ENCODE measurements at regions of chr22 and their contacts with region 1.

Region 1: DNA sequence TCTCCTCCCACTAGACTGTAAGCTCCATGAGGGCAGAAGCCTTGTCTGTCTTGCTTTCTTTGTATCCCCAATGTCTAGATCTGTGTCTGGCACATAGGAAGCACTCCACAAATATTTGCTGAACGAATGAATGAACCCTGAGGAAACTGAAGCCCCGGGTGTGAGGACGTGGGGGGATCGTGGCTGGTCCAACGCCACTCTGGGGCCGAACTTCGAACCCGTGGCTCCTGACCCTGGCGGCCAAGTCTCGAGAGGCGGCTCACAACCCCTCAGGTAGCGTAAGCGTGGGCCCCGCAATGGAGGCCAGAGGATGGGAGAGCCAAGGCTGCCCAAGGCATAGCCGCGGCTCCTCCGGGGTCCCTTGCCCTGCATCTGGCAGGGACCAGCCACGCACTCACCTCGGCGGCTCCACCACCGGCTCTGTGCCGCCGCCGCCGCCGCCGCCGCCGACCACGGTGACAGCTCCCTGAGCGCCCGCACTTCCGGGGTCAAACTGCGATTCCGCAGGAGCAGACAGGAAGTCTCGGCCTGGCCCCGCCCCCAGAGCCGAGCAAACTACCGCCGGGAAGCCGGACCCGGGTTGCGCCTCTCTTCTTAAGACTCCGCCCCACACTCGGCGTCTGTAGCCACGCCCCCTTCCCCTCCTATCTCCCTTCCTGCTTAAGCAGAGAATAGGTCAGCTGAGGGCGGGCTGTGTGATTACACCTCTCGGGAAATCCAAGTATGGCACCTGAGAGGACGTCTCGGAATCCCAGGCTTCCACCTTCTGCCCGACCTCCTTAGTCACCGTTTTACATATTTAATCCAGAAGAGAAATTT is at the start of gene ASCC2:
- DNase-seq: peak; percentile 95
- ATAC-seq: peak; percentile 81
- H3K4me3 ChIP-seq: peak within 1 kb of the TSS; percentile 99
- H3K27ac ChIP-seq: peak within 1 kb of the TSS; percentile 54
- H3K4me1 ChIP-seq: peaks cover 36% of the 10 kb centered on the region
- H3K27me3 ChIP-seq: no peaks in the 10 kb centered on the region
- CTCF ChIP-seq: no peak
- total RNA-seq, gene ASCC2: 37.0 and 49.6 TPM in 2 replicates

Region 2: GRCh38 chr22:29744902-29745301 is 93.1 kb before region 1 on chr22:
- CTCF ChIA-PET with region 1: no interaction called
- POLR2A ChIA-PET with region 1: no interaction called
- intact Hi-C with region 1: no loop called
- DNase-seq: no peak
- ATAC-seq: no peak
- H3K4me3 ChIP-seq: no peak overlapping the region
- H3K27ac ChIP-seq: no peak overlapping the region
- H3K4me1 ChIP-seq: no peaks in the 10 kb centered on the region
- H3K27me3 ChIP-seq: no peaks in the 10 kb centered on the region
- CTCF ChIP-seq: no peak

Region 3: GRCh38 chr22:29772170-29772641 is 65.8 kb before region 1 on chr22:
- CTCF ChIA-PET with region 1: no interaction called
- POLR2A ChIA-PET with region 1: no interaction called
- intact Hi-C with region 1: loop called (anchors 10 kb)
- DNase-seq: peak; percentile 47
- ATAC-seq: peak; percentile 36
- H3K4me3 ChIP-seq: no peak overlapping the region
- H3K27ac ChIP-seq: peak overlapping the region; percentile 73; the same call in 1 of the 2 replicates
- H3K4me1 ChIP-seq: peaks cover 12% of the 10 kb centered on the region
- H3K27me3 ChIP-seq: no peaks in the 10 kb centered on the region
- CTCF ChIP-seq: peak; percentile 62

Region 4: DNA sequence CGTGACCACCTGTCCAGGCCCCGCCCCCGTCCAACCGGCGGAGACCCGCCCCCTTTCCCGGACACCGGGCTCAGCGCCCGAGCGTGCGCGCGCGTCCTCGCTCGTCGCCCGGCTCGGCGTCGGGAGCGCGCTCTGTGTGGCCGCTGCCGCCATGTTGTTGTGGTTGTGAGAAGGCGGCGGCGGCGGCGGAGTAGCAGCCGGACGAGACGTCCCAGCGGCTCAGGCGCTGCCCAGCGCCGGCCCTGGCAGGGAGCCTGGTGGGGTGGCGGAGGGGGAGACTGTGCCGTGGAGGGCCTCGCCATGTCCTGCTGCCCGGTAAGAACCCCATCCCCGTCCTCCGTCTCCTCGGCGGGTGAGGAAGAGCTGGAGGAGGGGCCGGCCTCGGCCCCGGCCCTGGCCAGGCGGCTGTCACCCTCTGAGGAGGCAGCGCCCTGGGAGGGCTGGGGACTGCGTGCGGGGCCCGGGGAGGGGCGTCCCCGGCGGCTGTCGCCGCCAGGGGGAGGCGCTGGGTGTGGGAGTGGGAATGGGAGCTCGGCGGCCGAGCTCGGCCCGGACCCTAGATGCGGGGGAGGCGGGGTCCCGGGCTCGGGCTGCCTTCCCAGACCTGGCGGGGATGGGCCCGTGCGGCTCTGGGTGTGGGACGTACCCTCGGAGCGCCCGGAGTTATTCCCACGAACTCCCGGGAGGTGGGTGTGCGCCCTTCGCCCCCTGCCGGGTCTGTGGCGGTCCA is 45.2 kb after region 1 on chr22 and contains the start of gene MTMR3:
- CTCF ChIA-PET with region 1: interaction called, 5 read pairs
- POLR2A ChIA-PET with region 1: interaction called, 13 read pairs
- intact Hi-C with region 1: loop called (anchors 2 kb)
- DNase-seq: peak; percentile 88
- ATAC-seq: peak; percentile 87
- H3K4me3 ChIP-seq: peak within 1 kb of the TSS; percentile 86
- H3K27ac ChIP-seq: peak within 1 kb of the TSS; percentile 68
- H3K4me1 ChIP-seq: peaks cover 10% of the 10 kb centered on the region; the same call in 1 of the 2 replicates
- H3K27me3 ChIP-seq: no peaks in the 10 kb centered on the region
- CTCF ChIP-seq: peak; percentile 35; the same call in 1 of the 2 replicates
- total RNA-seq, gene MTMR3: 12.1 and 17.3 TPM in 2 replicates

Region 5: DNA sequence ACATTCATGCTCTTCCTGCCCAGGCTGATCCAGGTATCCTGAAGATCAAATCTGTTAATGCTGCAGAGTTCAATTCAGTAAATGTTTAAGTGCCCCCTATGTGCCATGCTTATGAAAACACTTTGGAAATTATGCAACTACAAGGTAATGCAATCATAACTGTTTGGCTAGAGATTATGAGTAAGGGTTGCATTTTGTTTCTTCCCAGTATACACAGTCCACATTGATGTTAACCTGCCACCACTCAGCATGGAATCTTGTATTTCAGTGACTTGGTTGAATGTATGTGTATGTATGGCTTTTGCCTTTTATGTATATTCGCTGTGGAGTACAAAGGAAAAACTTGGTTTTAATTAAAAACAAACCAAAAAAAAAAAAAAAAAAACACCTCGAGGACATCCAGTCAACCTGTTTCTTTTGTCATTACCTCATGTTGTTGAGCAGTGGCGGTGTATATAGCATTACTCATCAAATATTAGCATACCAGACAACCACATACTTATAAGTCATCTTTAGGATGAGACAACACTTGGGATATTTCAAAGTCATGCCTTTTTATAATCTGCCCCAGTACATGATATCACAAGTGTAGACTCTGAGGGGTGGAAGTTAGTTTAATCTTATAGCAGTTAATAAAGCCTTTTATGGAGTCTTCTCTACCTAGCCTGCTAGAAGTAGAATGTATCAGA is 156.2 kb after region 1 on chr22:
- CTCF ChIA-PET with region 1: no interaction called
- POLR2A ChIA-PET with region 1: no interaction called
- intact Hi-C with region 1: loop called (anchors 10 kb)
- DNase-seq: peak; percentile 72
- ATAC-seq: peak; percentile 97
- H3K4me3 ChIP-seq: no peak overlapping the region
- H3K27ac ChIP-seq: peak overlapping the region; percentile 60
- H3K4me1 ChIP-seq: peaks cover 39% of the 10 kb centered on the region
- H3K27me3 ChIP-seq: no peaks in the 10 kb centered on the region
- CTCF ChIP-seq: peak; percentile 50

Region 6: DNA sequence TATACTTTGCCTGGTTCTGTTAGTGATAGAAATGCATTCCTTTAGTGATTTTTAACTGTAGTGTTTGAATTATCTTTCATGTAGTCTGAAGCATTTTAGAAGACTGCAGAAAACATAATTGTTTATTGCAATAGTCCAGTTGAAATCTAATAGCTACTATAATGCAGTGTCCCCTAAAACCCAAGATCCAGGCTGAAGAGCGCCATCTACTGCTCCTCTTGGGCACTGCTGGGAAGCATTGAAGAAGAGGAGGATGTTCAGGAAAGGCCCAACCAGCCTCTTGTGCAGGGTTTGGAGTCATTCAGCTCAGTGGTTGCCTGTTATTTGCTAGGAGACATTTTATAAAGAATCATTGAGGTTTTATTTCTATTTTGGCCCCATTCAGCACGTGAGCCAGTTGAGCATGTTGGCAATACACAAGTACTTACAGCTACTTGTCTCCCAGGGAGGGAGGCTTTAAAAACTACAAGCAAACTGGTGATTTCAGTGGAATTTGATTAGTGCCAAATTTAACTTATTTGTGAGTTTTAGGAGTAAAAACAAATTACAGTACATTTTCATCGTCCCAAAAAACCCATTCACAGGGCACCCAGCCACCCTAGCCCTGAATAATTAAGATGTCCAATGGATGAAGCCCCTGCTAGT is 167.3 kb after region 1 on chr22:
- CTCF ChIA-PET with region 1: interaction called, 20 read pairs
- POLR2A ChIA-PET with region 1: no interaction called
- intact Hi-C with region 1: no loop called
- DNase-seq: peak; percentile 84
- ATAC-seq: peak; percentile 85
- H3K4me3 ChIP-seq: no peak overlapping the region
- H3K27ac ChIP-seq: no peak overlapping the region
- H3K4me1 ChIP-seq: no peaks in the 10 kb centered on the region
- H3K27me3 ChIP-seq: no peaks in the 10 kb centered on the region
- CTCF ChIP-seq: peak; percentile 93

Region 7: DNA sequence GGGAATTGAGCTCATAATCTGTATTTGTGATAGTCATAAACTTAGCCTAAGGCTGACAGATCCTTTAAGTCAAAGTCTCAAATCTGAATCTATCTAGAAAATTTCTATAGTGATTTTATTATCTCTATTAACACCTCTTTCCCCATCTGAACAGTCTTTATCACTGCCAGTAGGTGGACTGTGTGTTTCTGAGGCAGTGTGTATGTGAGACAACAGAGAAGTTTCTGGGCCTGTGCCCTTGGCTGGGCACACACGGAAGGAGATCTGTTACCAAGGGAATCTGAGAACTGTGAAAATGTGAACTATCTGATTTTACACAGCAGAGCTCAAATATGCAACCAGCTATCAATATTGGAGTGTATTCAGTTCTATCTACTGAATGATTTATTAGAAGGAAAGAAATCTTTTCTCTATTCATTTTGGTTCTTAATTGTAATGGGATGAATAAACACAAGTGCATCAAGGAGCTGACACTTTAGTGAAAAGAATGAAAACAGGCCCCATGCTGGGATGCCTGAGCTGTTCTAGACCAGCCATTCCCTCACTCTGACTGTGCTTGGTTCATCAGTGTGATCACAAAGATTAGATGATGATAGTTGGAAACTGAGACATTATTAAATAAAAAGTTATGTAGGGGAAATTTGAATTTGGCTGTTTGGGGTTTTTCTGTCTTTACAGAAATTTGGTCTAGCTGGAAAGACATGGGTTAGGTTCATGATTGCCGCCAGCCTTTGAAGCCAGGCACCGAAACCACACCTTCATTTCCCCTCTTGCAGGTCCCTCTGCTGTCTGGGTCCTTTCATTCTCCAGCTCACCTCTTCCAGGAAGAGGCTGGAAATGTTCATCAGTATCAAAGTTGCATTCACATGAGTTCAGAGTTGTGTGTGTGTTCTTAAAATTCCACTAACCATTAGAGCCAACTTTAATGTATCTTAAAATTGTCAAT is 340.5 kb after region 1 on chr22:
- CTCF ChIA-PET with region 1: no interaction called
- POLR2A ChIA-PET with region 1: interaction called, 16 read pairs
- intact Hi-C with region 1: no loop called
- DNase-seq: no peak
- ATAC-seq: peak; percentile 43
- H3K4me3 ChIP-seq: no peak overlapping the region
- H3K27ac ChIP-seq: no peak overlapping the region
- H3K4me1 ChIP-seq: no peaks in the 10 kb centered on the region
- H3K27me3 ChIP-seq: no peaks in the 10 kb centered on the region
- CTCF ChIP-seq: 0 out of 2 replicates have a peak, but pooled peaks have one; percentile 8

Measured in PC-3 (cell line).